ENCODE measurements at regions of chr14 and their contacts with region 1.

Region 1: GRCh38 chr14:39432179-39432618 is at the start of gene FBXO33:
- DNase-seq: peak; percentile 97 to 99
- ATAC-seq: peak; percentile 92 to 95 (median 94)
- H3K4me3 ChIP-seq: peak within 1 kb of the TSS; percentile 89
- H3K27ac ChIP-seq: peak within 1 kb of the TSS; percentile 92
- H3K4me1 ChIP-seq: peaks cover 28% of the 10 kb centered on the region
- H3K27me3 ChIP-seq: no peaks in the 10 kb centered on the region
- CTCF ChIP-seq: no peak
- total RNA-seq, gene FBXO33: 3.2 to 4.3 (median 3.6) TPM

Region 2: GRCh38 chr14:39102969-39103957 is 328.9 kb before region 1 on chr14 and contains the start of gene SEC23A:
- intact Hi-C with region 1: loop called in 1 of 2 experiments (anchors 5 kb)
- DNase-seq: peak; percentile 92 to 95
- ATAC-seq: peak; percentile 94 to 97 (median 97)
- H3K4me3 ChIP-seq: peak within 1 kb of the TSS; percentile 95
- H3K27ac ChIP-seq: peak within 1 kb of the TSS; percentile 92
- H3K4me1 ChIP-seq: peaks cover 11% of the 10 kb centered on the region
- H3K27me3 ChIP-seq: no peaks in the 10 kb centered on the region
- CTCF ChIP-seq: no peak
- total RNA-seq, gene SEC23A: 70.7 to 84.8 (median 80.5) TPM

Region 3: GRCh38 chr14:39174560-39175444 is 257.4 kb before region 1 on chr14 and contains the start of gene PNN:
- intact Hi-C with region 1: loop called (anchors 5 kb)
- DNase-seq: peak; percentile 96 to 98
- ATAC-seq: peak; percentile 93 to 97 (median 96)
- H3K4me3 ChIP-seq: peak within 1 kb of the TSS; percentile 90
- H3K27ac ChIP-seq: peak within 1 kb of the TSS; percentile 94
- H3K4me1 ChIP-seq: peaks cover 11% of the 10 kb centered on the region
- H3K27me3 ChIP-seq: no peaks in the 10 kb centered on the region
- CTCF ChIP-seq: no peak
- total RNA-seq, gene PNN: 20.1 to 29.5 (median 26.4) TPM

Measured in psoas muscle (tissue), 8 donors.